Activated naive CD4-positive, alpha-beta T cell treated with anti-CD3 and anti-CD28 coated beads, Interleukin-2, amount 10 ng/mL, durations not matched to agents 7 days and 5 days (primary cell): ENCODE measurements at regions of chr2 and their contacts with region 1.

Region 1: GRCh38 chr2:147288131-147288530 is 556.7 kb upstream of the ACVR2A start:
- DNase-seq: peak; percentile 61
- H3K4me3 Mint-ChIP-seq: no peak overlapping the region
- H3K27ac Mint-ChIP-seq: peak overlapping the region; percentile 87
- H3K4me1 Mint-ChIP-seq: peaks cover 55% of the 10 kb centered on the region
- H3K27me3 Mint-ChIP-seq: no peaks in the 10 kb centered on the region

Region 2: DNA sequence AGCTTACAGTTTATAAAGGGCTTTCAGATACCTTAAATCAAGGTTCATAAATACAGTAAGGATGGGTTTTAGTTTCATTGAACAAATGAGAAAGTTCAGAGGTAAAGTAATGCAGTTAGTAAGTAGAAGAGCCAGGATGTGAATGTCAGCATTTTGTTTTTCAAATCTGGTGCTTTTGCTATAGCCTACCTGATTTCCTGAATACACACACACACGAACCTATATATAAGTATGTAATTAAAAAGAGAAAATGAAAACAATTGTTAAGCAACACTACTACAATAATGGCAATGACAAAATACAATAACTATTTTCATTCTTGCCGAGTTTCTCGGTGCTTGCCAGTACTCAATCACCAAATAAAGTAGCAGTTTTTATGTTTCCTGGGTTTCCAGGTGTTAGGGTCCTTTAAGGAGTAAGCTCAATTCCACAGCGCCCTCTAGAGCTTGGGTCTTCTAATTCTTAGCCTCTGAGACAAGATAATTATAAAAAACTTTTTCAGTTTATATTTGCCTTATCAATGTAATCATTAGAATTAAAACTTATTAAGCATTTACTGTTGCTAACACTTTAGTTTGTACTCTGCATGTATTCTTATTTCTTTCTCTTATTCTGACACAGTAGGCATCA is 43.8 kb after region 1 on chr2:
- CTCF ChIA-PET with region 1: interaction called, 11 read pairs
- DNase-seq: peak; percentile 67
- H3K4me3 Mint-ChIP-seq: no peak overlapping the region
- H3K27ac Mint-ChIP-seq: peak overlapping the region; percentile 63
- H3K4me1 Mint-ChIP-seq: peaks cover 35% of the 10 kb centered on the region
- H3K27me3 Mint-ChIP-seq: peaks cover 3% of the 10 kb centered on the region

Region 3: GRCh38 chr2:147345246-147345645 is 57.1 kb after region 1 on chr2:
- CTCF ChIA-PET with region 1: no interaction called
- DNase-seq: no peak
- H3K4me3 Mint-ChIP-seq: no peak overlapping the region
- H3K27ac Mint-ChIP-seq: no peak overlapping the region
- H3K4me1 Mint-ChIP-seq: no peaks in the 10 kb centered on the region
- H3K27me3 Mint-ChIP-seq: peaks cover 18% of the 10 kb centered on the region